Posterior vena cava (tissue), 2 donors: ENCODE measurements at regions of chr14 and their contacts with region 1.

Region 1: GRCh38 chr14:94621358-94622134 is 9.4 kb downstream of the SERPINA3 start:
- DNase-seq: no peak

Region 2: GRCh38 chr14:94578712-94579111 is 42.8 kb before region 1 on chr14:
- intact Hi-C with region 1: loop called in 1 of 2 experiments (anchors 1 kb)
- DNase-seq: no peak

Region 3: DNA sequence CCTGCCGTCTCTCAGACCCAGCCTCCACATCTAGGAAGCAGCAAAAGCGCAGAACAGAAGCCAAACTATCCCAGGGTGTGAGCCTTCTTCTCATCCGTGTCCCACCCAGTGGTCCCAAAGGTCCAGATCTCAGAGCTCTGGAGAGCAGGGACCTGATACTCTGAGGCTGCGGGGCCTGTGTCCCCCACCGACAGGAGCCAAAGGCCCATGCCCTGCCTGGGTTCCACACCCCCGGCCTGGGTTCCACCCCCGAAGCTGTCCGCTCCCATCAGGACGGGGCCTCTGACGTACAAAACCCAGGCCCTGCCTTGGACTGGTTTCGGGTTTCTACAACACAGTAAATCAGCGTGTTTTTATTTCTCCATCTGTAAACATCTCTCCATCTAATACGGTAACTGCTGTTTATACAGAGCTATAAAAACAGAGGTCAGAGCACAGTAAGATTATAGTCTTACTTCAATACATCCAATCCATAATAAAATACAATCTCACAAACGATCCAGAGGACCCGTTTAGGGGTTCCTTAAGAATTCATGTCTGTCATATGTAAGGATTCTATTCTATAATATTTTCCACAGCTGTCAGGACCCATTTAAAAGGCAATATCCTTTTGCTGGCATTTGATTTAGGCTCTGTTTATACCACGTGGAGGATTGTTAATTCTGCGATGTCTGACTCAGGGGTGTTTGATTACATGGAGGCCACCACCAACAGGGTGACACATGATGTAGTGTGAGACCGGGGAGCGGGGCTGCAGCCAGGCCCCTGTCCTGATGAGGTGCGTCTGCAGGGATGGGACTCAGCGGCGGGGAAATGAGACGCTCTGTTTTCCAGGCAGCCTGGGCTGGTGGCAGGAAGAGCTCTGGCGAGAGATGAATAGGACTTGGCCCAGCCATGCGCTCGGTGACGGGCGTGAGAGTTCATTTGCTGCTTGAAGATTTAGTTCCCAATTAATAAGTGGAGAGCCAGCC is 425.4 kb after region 1 on chr14:
- intact Hi-C with region 1: no loop called
- DNase-seq: no peak